PC-3 (cell line): ENCODE measurements at regions of chr5 and their contacts with region 1.

Region 1: GRCh38 chr5:24245821-24246220 is 399.0 kb downstream of the CDH10 start:
- DNase-seq: peak; percentile 53
- ATAC-seq: peak; percentile 87
- H3K4me3 ChIP-seq: no peak overlapping the region
- H3K27ac ChIP-seq: no peak overlapping the region
- H3K4me1 ChIP-seq: peaks cover 19% of the 10 kb centered on the region
- H3K27me3 ChIP-seq: no peaks in the 10 kb centered on the region
- CTCF ChIP-seq: no peak

Region 2: DNA sequence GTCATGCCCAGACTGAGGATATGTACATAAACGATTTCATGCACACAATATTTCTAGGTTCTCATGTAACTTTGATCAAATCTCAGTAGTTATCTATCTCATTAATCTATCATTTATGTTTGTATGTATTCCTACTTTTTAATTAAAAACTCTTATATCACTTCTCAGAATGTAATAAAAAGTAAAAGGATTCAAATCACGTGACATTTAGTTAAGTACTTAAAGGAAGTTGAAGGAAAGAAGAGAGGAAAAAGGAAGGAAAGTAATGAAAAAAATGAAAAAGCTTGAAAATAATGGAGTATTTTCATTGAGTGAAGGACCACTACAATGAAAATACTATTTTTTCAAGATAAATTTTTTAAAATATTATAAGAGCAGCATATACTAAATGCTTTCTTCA is 203.1 kb before region 1 on chr5:
- CTCF ChIA-PET with region 1: no interaction called
- POLR2A ChIA-PET with region 1: no interaction called
- intact Hi-C with region 1: no loop called
- DNase-seq: no peak
- ATAC-seq: no peak
- H3K4me3 ChIP-seq: no peak overlapping the region
- H3K27ac ChIP-seq: no peak overlapping the region
- H3K4me1 ChIP-seq: peaks cover 24% of the 10 kb centered on the region
- H3K27me3 ChIP-seq: no peaks in the 10 kb centered on the region
- CTCF ChIP-seq: no peak

Region 3: DNA sequence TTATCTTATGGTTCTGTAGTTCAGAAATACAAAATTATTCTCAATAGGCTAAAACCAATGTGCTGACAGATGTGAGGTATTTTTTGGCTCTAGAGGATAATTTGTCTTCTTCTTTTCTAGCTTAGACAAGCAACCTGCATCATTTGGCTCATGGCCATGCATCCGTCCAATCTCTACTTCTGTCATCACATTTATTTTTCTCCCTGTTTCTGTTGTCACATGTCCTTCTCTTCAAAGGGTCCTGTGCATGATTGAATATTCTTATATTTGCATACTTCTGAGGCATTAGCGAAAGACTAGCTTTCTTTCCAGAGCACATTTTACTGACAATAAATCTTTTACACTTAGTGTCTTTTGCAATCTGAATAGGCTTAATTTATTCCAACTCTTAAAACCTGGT is 165.8 kb before region 1 on chr5:
- CTCF ChIA-PET with region 1: no interaction called
- POLR2A ChIA-PET with region 1: no interaction called
- intact Hi-C with region 1: no loop called
- DNase-seq: no peak
- ATAC-seq: no peak
- H3K4me3 ChIP-seq: no peak overlapping the region
- H3K27ac ChIP-seq: no peak overlapping the region
- H3K4me1 ChIP-seq: peaks cover 3% of the 10 kb centered on the region; the same call in 1 of the 2 replicates
- H3K27me3 ChIP-seq: no peaks in the 10 kb centered on the region
- CTCF ChIP-seq: no peak

Region 4: GRCh38 chr5:24226479-24226878 is 19.3 kb before region 1 on chr5:
- CTCF ChIA-PET with region 1: no interaction called
- POLR2A ChIA-PET with region 1: no interaction called
- intact Hi-C with region 1: loop called (anchors 1 kb)
- DNase-seq: no peak
- ATAC-seq: no peak
- H3K4me3 ChIP-seq: no peak overlapping the region
- H3K27ac ChIP-seq: no peak overlapping the region
- H3K4me1 ChIP-seq: peaks cover 23% of the 10 kb centered on the region
- H3K27me3 ChIP-seq: no peaks in the 10 kb centered on the region
- CTCF ChIP-seq: no peak

Region 5: DNA sequence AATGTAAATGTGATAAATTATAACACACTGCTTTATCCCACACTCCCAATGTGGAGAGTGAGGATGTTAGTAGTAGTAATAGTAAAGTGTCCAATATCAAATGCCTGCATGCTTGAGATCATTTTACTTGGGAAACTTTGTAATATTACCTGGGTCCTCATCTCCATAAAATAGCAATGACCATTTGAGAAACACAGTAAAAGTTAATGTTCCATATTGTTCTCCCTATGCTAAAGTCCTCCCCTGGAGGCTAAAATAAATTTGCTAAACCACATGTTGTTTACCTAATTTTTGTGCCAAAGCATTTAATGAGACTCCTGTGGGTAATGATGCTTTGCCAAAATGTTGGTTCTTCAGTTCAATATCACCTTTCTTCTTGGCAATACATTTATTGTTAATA is 107.8 kb after region 1 on chr5:
- CTCF ChIA-PET with region 1: no interaction called
- POLR2A ChIA-PET with region 1: no interaction called
- intact Hi-C with region 1: loop called (anchors 5 kb)
- DNase-seq: peak; percentile 23
- ATAC-seq: peak; percentile 93
- H3K4me3 ChIP-seq: no peak overlapping the region
- H3K27ac ChIP-seq: no peak overlapping the region
- H3K4me1 ChIP-seq: no peaks in the 10 kb centered on the region
- H3K27me3 ChIP-seq: no peaks in the 10 kb centered on the region
- CTCF ChIP-seq: no peak